MCF 10A (cell line): ENCODE measurements at regions of chr9 and their contacts with region 1.

Region 1: DNA sequence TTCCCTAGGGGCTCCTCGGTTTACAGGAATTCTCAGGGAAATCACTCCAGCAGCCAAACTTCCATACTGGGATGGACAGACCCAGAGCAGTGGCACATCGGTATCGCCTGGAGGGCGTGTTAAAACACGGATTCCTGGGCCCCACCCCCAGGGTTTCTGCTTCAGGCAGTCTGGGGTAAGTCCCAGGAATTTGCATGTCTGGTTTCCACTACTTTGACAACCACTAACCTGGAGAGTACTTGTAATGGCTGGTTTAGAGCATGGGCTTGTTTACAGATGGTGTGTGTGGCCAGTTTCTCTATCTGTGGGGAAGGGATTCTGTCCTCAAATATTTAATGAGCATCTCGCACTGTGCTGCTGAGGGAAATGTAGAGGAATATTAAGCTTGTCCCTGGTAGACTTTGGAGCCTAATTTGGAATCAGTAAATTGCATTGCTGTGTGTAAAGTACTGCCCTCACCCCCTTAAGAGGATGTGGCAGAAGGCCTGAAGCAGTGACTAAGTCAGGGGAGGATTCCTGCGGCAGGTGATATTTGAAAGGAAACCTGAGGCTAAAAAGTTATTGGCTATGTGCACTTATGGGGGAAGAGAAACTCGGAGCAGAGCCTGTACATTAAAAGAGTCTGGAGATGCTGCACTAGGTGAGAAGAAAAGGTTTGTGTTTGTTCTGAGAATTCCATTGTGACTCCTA is 18.6 kb upstream of the TJP2 start:
- DNase-seq: no peak
- H3K4me3 Mint-ChIP-seq: no peak overlapping the region
- H3K27ac Mint-ChIP-seq: peak overlapping the region; percentile 73
- H3K4me1 Mint-ChIP-seq: peaks cover 10% of the 10 kb centered on the region
- H3K27me3 Mint-ChIP-seq: no peaks in the 10 kb centered on the region
- CTCF ChIP-seq: no peak

Region 2: DNA sequence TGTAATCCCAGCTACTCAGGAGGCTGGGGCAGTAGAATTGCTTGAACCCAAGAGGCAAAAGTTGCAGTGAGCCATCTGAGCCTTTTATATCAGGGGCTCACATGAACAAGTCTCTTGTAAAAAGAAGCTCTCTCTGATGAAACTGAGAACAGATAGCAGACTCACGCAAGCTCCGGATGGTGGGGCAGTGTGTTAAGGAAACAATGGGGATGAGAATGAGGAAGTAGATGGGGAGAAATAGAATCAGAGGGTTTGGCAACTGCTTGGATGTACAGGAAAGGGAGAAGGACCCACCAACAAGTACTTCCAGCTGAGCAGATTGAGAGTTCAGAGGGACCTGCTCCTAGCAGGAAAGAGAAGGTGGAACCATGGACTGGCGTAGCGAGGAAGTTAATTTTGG is 633.4 kb before region 1 on chr9:
- CTCF ChIA-PET with region 1: no interaction called
- POLR2A ChIA-PET with region 1: no interaction called
- intact Hi-C with region 1: no loop called
- DNase-seq: no peak
- H3K4me3 Mint-ChIP-seq: no peak overlapping the region
- H3K27ac Mint-ChIP-seq: no peak overlapping the region
- H3K4me1 Mint-ChIP-seq: no peaks in the 10 kb centered on the region
- H3K27me3 Mint-ChIP-seq: no peaks in the 10 kb centered on the region
- CTCF ChIP-seq: no peak

Region 3: DNA sequence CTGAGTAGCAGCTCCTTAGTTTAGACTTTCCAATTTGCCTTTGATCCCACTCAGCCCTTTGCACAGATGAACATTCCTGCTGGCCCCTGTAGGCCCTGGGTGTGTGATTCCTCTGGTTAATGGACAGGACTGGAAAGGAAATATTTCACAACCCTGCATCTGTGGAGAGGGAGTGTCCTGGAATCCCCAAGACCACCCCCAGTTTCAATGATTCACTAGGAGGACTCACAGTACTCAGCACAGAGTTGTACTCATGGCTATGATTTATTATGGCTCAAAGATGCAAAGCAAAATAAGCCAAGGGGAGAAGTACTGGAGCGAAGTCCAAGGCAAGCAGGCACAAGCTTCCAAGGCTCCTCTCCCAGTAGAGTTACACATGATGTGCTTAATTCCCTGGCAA is 23.8 kb before region 1 on chr9:
- CTCF ChIA-PET with region 1: interaction called, 11 read pairs
- POLR2A ChIA-PET with region 1: interaction called, 10 read pairs
- intact Hi-C with region 1: no loop called
- DNase-seq: peak; percentile 93
- H3K4me3 Mint-ChIP-seq: peak overlapping the region; percentile 0
- H3K27ac Mint-ChIP-seq: peak overlapping the region; percentile 77
- H3K4me1 Mint-ChIP-seq: peaks cover 33% of the 10 kb centered on the region
- H3K27me3 Mint-ChIP-seq: no peaks in the 10 kb centered on the region
- CTCF ChIP-seq: no peak

Region 4: GRCh38 chr9:69145144-69145715 is 10.3 kb before region 1 on chr9:
- CTCF ChIA-PET with region 1: interaction called, 11 read pairs
- POLR2A ChIA-PET with region 1: interaction called, 6 read pairs
- intact Hi-C with region 1: no loop called
- DNase-seq: no peak
- H3K4me3 Mint-ChIP-seq: no peak overlapping the region
- H3K27ac Mint-ChIP-seq: no peak overlapping the region
- H3K4me1 Mint-ChIP-seq: peaks cover 7% of the 10 kb centered on the region
- H3K27me3 Mint-ChIP-seq: no peaks in the 10 kb centered on the region
- CTCF ChIP-seq: no peak

Region 5: GRCh38 chr9:69357030-69357775 is 201.7 kb after region 1 on chr9:
- CTCF ChIA-PET with region 1: no interaction called
- POLR2A ChIA-PET with region 1: no interaction called
- intact Hi-C with region 1: no loop called
- DNase-seq: no peak
- H3K4me3 Mint-ChIP-seq: no peak overlapping the region
- H3K27ac Mint-ChIP-seq: no peak overlapping the region
- H3K4me1 Mint-ChIP-seq: no peaks in the 10 kb centered on the region
- H3K27me3 Mint-ChIP-seq: peaks cover 54% of the 10 kb centered on the region
- CTCF ChIP-seq: no peak